ENCODE measurements at regions of chr19 and their contacts with region 1.

Region 1: GRCh38 chr19:14006243-14006765 is at the start of gene RFX1:
- DNase-seq: peak; percentile 100
- ATAC-seq: peak; percentile 84
- H3K4me3 Mint-ChIP-seq: peak within 1 kb of the TSS; percentile 94
- H3K27ac Mint-ChIP-seq: peak within 1 kb of the TSS; percentile 98
- H3K4me1 Mint-ChIP-seq: peaks cover 39% of the 10 kb centered on the region
- H3K27me3 Mint-ChIP-seq: no peaks in the 10 kb centered on the region
- total RNA-seq, gene RFX1: 14.2 to 15.3 TPM

Region 2: GRCh38 chr19:12789904-12790619 is 1216.2 kb before region 1 on chr19:
- CTCF ChIA-PET with region 1: no interaction called
- POLR2A ChIA-PET with region 1: no interaction called
- intact Hi-C with region 1: loop called in 1 of 2 experiments (anchors 2 kb)
- DNase-seq: peak; percentile 99
- ATAC-seq: peak; percentile 48
- H3K4me3 Mint-ChIP-seq: peak overlapping the region; percentile 92
- H3K27ac Mint-ChIP-seq: peak overlapping the region; percentile 98
- H3K4me1 Mint-ChIP-seq: peaks cover 28% of the 10 kb centered on the region
- H3K27me3 Mint-ChIP-seq: no peaks in the 10 kb centered on the region

Region 3: DNA sequence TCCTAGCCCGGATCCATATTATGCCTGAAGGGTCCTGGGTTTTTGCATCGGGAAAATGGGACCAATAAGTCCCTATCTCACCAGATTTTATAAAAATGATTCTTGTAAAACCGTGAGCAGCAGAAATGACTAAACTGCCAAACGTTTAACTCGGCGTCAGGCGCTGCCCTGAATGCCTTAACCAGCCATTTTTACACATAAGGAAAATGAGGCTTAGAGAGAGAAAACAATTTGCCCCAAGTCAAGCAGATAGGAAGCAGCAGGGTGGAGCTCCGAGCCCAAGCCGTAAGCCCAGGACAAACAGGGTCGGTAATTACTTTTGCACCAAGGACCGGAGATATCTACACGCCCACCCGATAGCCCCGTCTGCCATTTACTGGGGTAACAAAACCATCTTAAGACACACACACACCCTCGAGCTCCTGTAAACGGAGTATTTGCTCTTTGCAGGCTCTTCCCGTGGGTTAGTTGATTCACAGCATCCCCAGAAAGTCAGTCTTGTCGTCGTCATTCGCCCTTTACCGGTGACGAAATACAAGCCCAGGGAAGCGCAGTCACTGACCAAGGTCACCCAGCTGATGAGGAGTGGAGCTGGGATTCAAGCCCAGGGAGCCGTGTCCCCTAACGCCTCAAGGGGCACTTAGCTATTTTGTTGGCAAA is 258.0 kb before region 1 on chr19:
- CTCF ChIA-PET with region 1: no interaction called
- POLR2A ChIA-PET with region 1: no interaction called
- intact Hi-C with region 1: loop called in 1 of 2 experiments (anchors 1 kb)
- DNase-seq: peak; percentile 50
- ATAC-seq: peak; percentile 2
- H3K4me3 Mint-ChIP-seq: peak overlapping the region; percentile 80
- H3K27ac Mint-ChIP-seq: peak overlapping the region; percentile 84
- H3K4me1 Mint-ChIP-seq: peaks cover 30% of the 10 kb centered on the region
- H3K27me3 Mint-ChIP-seq: no peaks in the 10 kb centered on the region

Region 4: DNA sequence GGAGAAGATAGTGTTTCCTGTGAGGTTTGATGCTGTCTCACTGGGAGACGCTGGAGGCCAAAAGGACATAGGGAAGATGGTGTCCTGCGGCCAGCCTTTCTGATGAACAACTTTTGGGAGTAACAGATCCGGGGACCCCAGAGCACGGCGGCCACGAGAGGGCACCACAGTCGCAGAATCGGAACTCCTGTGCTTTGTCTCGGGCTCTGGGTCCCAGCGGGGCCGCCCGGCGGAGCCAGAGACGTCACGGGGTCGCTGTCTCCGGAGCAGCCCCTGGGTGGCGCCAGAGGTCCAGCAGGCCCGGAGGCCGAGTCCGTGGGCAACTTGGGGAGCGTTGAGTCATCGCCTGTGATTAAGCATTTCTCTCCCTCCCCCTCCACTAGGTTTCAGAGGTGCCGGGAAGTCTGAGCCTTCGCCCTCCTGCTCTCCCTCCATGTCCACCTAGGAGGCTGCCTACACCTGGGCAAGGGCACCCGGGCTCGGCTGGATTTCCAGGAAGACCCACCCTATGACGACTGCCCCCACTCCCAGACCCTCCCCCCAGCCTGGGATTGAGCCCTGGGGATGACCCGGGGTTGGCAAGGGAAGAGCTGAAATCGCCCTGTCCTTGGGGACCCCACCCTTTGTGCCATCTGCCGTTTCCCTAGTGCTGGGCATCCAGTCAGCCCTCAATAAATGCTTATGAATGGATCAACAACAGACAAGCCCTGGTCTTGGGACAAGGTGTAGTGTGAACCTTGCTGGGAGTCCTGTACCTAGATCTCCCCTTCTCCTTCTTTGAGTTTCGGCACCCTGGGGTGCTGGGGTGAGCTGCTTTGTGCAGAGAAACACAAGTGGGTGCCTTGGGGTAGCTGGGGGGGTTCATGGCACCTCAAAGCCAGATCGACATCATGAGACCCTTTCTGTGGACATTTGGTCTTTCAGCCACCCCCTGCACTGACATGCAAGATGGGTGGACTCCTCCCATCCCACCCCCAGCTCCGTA is 126.0 kb before region 1 on chr19:
- CTCF ChIA-PET with region 1: interaction called, 4 read pairs
- POLR2A ChIA-PET with region 1: no interaction called
- intact Hi-C with region 1: loop called in 1 of 2 experiments (anchors 1 kb)
- DNase-seq: peak; percentile 99
- ATAC-seq: peak; percentile 94
- H3K4me3 Mint-ChIP-seq: peak overlapping the region; percentile 49
- H3K27ac Mint-ChIP-seq: peak overlapping the region; percentile 85
- H3K4me1 Mint-ChIP-seq: peaks cover 35% of the 10 kb centered on the region
- H3K27me3 Mint-ChIP-seq: no peaks in the 10 kb centered on the region

Region 5: DNA sequence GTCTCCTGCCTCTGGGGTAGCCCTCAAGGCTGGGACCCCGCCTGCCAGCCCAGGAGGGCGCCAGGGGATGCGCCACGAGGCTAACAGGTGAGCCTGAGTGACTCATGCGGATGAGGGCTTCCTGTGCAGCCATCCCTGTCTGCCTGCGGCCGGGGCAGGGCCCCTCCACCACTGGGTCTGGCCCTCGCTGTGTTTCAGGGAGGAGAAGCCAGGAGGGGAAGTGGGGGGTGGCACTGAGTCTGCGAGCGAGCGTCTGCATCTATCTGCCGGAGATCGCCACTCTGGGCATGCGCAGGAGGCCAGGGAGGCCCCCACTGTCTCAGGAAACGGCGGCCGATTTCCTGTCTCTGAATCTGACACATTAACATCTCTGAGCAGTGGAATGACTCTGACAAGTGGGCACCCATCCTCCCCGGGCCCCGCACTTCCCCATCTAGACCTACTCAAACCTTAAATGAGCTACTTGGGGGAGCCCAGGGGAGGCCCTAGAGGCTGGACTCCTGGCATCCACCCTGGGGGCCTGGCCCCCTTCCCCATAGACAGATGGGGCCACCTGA is 19.9 kb before region 1 on chr19:
- CTCF ChIA-PET with region 1: interaction called, 4 read pairs
- POLR2A ChIA-PET with region 1: interaction called, 7 read pairs
- intact Hi-C with region 1: loop called (anchors 1 kb)
- DNase-seq: peak; percentile 100
- ATAC-seq: peak; percentile 92
- H3K4me3 Mint-ChIP-seq: peak overlapping the region; percentile 63
- H3K27ac Mint-ChIP-seq: peak overlapping the region; percentile 97
- H3K4me1 Mint-ChIP-seq: peaks cover 65% of the 10 kb centered on the region
- H3K27me3 Mint-ChIP-seq: no peaks in the 10 kb centered on the region

Region 6: GRCh38 chr19:14081325-14082093 is 75.2 kb after region 1 on chr19:
- CTCF ChIA-PET with region 1: no interaction called
- POLR2A ChIA-PET with region 1: no interaction called
- intact Hi-C with region 1: loop called (anchors 1 to 2 kb)
- DNase-seq: peak; percentile 99
- ATAC-seq: peak; percentile 95
- H3K4me3 Mint-ChIP-seq: peak overlapping the region; percentile 90
- H3K27ac Mint-ChIP-seq: peak overlapping the region; percentile 92
- H3K4me1 Mint-ChIP-seq: peaks cover 10% of the 10 kb centered on the region
- H3K27me3 Mint-ChIP-seq: no peaks in the 10 kb centered on the region

Region 7: GRCh38 chr19:14383661-14384555 is 377.6 kb after region 1 on chr19:
- CTCF ChIA-PET with region 1: no interaction called
- POLR2A ChIA-PET with region 1: no interaction called
- intact Hi-C with region 1: loop called in 1 of 2 experiments (anchors 5 kb)
- DNase-seq: peak; percentile 72
- ATAC-seq: peak; percentile 10
- H3K4me3 Mint-ChIP-seq: peak overlapping the region; percentile 92
- H3K27ac Mint-ChIP-seq: peak overlapping the region; percentile 99
- H3K4me1 Mint-ChIP-seq: peaks cover 40% of the 10 kb centered on the region
- H3K27me3 Mint-ChIP-seq: no peaks in the 10 kb centered on the region